Vagina (tissue), 2 donors: ENCODE measurements at regions of chr11 and their contacts with region 1.

Region 1: DNA sequence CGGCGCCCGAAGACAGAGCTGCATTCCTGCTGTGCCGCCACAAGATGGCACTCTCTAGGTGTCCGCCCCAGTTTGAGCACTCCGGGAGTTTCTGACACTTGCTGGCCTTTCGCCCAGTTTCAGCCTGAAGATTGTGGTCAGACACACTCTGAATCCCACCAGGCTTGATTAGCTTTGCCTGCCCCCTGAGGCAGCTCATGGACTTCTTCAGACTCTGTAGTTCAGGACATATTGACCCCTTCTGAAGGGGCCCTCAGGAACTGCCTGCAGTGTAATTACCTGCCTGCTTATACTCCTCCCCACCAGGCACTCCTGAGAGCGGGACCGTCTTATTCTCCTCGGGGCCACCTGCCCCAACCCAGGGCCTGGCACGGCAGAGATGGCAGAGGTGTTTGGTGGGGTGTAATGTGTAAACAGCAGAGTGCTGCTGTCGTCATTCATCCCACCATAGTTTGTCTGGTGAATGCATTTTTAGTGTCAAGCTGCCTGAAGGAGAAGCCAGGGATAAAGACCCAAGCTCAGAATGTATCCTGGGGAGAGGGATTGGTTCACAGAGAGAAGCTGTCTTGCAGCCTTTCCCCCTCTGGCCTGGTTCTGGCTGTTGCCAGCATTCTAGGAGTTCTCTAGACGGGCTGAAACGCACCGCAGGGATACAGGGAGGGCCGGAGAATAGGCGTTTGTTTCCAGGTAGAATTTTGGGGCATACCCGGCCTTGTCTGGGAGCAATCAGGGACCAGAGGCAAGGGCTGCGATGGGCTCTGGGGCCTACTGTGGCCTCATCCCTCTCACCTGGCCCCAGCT is 46.4 kb downstream of the EIF3F start:
- DNase-seq: peak; percentile 86 to 92
- H3K4me3 ChIP-seq: peak overlapping the region in 1 of 2 donors; percentile 1
- H3K27ac ChIP-seq: peak overlapping the region; percentile 74
- H3K4me1 ChIP-seq: peaks cover 42% of the 10 kb centered on the region
- H3K27me3 ChIP-seq: no peaks in the 10 kb centered on the region
- CTCF ChIP-seq: peak; percentile 42 to 91 (median 77)
- POLR2A ChIP-seq: no peak

Region 2: GRCh38 chr11:7833527-7833926 is 200.0 kb before region 1 on chr11:
- intact Hi-C with region 1: no loop called
- DNase-seq: no peak
- H3K4me3 ChIP-seq: no peak overlapping the region
- H3K27ac ChIP-seq: no peak overlapping the region
- H3K4me1 ChIP-seq: no peaks in the 10 kb centered on the region
- H3K27me3 ChIP-seq: no peaks in the 10 kb centered on the region
- CTCF ChIP-seq: no peak
- POLR2A ChIP-seq: no peak

Region 3: GRCh38 chr11:8070417-8071115 is 37.1 kb after region 1 on chr11:
- intact Hi-C with region 1: loop called (anchors 5 kb)
- DNase-seq: no peak
- H3K4me3 ChIP-seq: no peak overlapping the region
- H3K27ac ChIP-seq: no peak overlapping the region
- H3K4me1 ChIP-seq: peaks cover 28% of the 10 kb centered on the region
- H3K27me3 ChIP-seq: no peaks in the 10 kb centered on the region
- CTCF ChIP-seq: peak in 1 of 3 experiments; percentile 32
- POLR2A ChIP-seq: no peak

Region 4: GRCh38 chr11:8080674-8081590 is 47.4 kb after region 1 on chr11 and contains the start of gene TUB:
- intact Hi-C with region 1: loop called (anchors 5 kb)
- DNase-seq: no peak
- H3K4me3 ChIP-seq: peak within 1 kb of the TSS; percentile 60 to 70
- H3K27ac ChIP-seq: peak within 1 kb of the TSS; percentile 84
- H3K4me1 ChIP-seq: peaks cover 37% of the 10 kb centered on the region
- H3K27me3 ChIP-seq: no peaks in the 10 kb centered on the region
- CTCF ChIP-seq: no peak
- POLR2A ChIP-seq: peak in 1 of 2 donors; percentile 57
- total RNA-seq, gene TUB: 13.5 TPM

Region 5: GRCh38 chr11:9479899-9480298 is 1446.4 kb after region 1 on chr11:
- intact Hi-C with region 1: no loop called
- DNase-seq: no peak
- H3K4me3 ChIP-seq: no peak overlapping the region
- H3K27ac ChIP-seq: no peak overlapping the region
- H3K4me1 ChIP-seq: no peaks in the 10 kb centered on the region
- H3K27me3 ChIP-seq: no peaks in the 10 kb centered on the region
- CTCF ChIP-seq: no peak
- POLR2A ChIP-seq: no peak